ENCODE measurements at regions of chr19 and their contacts with region 1.

Region 1: DNA sequence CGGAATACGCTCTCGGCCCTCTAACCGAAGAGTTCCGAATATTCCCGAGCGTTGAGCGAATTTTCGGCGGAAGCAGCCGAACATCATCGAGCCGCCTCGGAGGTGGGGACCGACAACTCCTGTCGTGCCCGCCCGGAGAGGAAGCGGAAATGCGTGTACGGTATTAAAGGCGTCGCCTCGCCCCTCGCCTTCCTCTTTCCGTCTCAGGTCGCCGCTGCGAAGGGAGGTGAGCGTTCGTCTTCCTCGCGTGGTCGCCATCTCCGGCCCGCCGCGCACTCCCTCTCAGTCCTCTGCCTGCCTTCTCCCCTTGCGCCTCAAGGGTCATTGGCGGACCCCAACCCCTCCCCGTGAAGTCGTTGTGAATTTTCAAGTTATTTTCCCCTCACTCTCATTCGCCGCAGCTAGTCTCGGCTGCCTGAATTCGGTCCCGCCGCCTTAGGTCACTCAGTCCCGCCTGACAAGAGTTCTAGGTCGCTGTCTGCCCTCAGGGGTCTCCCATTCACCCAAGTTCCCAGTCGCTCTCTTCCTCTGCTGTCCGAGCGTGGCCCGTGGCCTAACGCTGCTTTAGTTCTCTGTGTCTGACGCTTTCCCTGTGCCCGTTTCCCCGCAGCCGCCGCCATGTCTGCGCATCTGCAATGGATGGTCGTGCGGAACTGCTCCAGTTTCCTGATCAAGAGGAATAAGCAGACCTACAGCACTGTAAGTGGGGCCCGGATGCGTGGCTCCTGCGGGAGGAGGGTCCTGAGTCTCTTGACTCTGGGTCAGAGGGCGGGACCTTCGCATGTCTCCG is at the start of gene RPL28:
- DNase-seq: peak; percentile 99
- ATAC-seq: peak; percentile 73
- H3K4me3 Mint-ChIP-seq: peak within 1 kb of the TSS; percentile 100
- H3K27ac Mint-ChIP-seq: peak within 1 kb of the TSS; percentile 99
- H3K4me1 Mint-ChIP-seq: peaks cover 68% of the 10 kb centered on the region
- H3K27me3 Mint-ChIP-seq: no peaks in the 10 kb centered on the region
- total RNA-seq, gene RPL28: 2,948 to 3,082 TPM

Region 2: GRCh38 chr19:55258828-55259539 is 127.0 kb before region 1 on chr19 and contains the start of gene PPP6R1:
- CTCF ChIA-PET with region 1: interaction called, 13 read pairs
- POLR2A ChIA-PET with region 1: interaction called, 19 read pairs
- DNase-seq: peak; percentile 95
- ATAC-seq: peak; percentile 76
- H3K4me3 Mint-ChIP-seq: peak within 1 kb of the TSS; percentile 91
- H3K27ac Mint-ChIP-seq: peak within 1 kb of the TSS; percentile 100
- H3K4me1 Mint-ChIP-seq: peaks cover 26% of the 10 kb centered on the region
- H3K27me3 Mint-ChIP-seq: no peaks in the 10 kb centered on the region
- total RNA-seq, gene PPP6R1: 256 to 265 TPM

Region 3: DNA sequence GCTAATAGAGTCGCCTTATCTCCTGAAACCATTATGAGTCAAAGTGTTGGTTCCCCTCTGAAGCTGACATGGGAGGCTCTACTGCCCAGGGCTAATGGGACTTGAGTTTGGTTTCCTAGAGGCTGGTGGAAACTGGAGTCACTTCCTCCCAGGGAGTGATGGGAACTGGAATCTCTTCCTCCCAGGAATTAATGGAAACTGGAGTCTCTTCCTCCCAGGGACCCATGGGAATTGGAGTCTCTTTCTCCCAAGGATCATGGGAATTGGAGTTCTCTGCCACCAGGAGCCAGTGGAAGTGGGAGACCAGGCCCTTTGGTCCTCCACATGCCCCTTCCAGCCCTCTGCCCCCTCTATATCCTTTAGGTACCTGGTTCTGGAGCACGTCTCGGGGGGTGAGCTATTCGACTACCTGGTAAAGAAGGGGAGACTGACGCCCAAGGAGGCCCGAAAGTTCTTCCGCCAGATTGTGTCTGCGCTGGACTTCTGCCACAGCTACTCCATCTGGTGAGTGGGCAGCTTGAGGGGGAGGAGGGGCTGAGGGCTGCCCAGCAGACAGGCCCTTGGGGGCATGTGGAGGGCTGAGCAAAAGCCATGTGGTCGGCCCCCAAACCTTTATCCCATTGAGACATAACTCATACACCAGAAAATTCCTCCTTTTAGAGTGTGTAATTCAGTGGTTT is 96.7 kb before region 1 on chr19:
- CTCF ChIA-PET with region 1: interaction called, 19 read pairs
- POLR2A ChIA-PET with region 1: no interaction called
- DNase-seq: no peak
- ATAC-seq: no peak
- H3K4me3 Mint-ChIP-seq: no peak overlapping the region
- H3K27ac Mint-ChIP-seq: no peak overlapping the region
- H3K4me1 Mint-ChIP-seq: peaks cover 13% of the 10 kb centered on the region
- H3K27me3 Mint-ChIP-seq: no peaks in the 10 kb centered on the region

Region 4: GRCh38 chr19:55301459-55302317 is 84.2 kb before region 1 on chr19:
- CTCF ChIA-PET with region 1: interaction called, 30 read pairs
- POLR2A ChIA-PET with region 1: interaction called, 4 read pairs
- DNase-seq: peak; percentile 97
- ATAC-seq: peak; percentile 94
- H3K4me3 Mint-ChIP-seq: peak overlapping the region; percentile 80
- H3K27ac Mint-ChIP-seq: peak overlapping the region; percentile 89
- H3K4me1 Mint-ChIP-seq: peaks cover 18% of the 10 kb centered on the region
- H3K27me3 Mint-ChIP-seq: peaks cover 3% of the 10 kb centered on the region

Region 5: DNA sequence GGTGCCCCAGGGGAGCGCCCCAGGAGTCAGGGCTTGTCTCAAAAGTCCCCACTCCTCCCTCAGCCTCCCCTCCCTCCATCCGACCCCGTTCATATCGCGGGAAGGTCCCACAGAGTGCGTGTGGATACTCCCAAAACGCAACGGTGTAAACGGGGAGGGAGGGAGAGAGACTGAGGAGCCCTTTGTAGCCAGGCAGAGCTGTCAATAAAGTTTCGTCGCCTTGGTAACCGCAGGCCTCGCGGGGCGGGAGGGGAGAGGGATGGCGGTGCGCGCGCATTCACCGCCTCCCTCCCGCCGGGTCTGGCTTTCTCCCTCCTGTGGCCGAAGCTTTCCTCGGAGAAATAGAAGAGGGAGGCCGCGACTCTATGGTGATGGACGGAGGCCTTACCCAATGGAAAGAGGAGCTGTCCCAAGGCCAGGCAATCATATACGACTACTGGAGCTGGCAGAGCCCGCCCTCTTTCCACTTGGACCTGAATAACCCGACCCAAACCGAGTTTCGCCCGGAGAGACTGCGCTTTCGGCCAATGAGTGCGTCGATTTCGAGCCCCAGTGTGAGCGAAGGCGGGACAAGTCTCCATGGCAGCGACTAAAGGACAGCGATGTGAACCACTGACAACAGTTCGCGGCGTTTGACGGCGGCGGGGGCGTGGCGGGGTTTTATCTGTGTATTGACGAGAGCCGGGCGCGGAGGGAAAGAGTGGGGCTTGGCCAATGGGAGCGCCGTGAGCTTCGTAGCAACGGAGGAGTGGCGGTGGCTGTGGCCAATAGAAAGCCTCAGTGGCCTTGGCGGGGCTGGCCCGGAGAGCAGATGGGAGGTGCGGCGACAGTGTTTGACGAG is 46.7 kb before region 1 on chr19 and contains the start of gene KMT5C:
- CTCF ChIA-PET with region 1: interaction called, 18 read pairs
- POLR2A ChIA-PET with region 1: interaction called, 8 read pairs
- DNase-seq: peak; percentile 100
- ATAC-seq: peak; percentile 86
- H3K4me3 Mint-ChIP-seq: peak within 1 kb of the TSS; percentile 89
- H3K27ac Mint-ChIP-seq: peak within 1 kb of the TSS; percentile 95
- H3K4me1 Mint-ChIP-seq: peaks cover 20% of the 10 kb centered on the region
- H3K27me3 Mint-ChIP-seq: peaks cover 9% of the 10 kb centered on the region
- total RNA-seq, gene KMT5C: 21.9 to 26.7 TPM

Region 6: DNA sequence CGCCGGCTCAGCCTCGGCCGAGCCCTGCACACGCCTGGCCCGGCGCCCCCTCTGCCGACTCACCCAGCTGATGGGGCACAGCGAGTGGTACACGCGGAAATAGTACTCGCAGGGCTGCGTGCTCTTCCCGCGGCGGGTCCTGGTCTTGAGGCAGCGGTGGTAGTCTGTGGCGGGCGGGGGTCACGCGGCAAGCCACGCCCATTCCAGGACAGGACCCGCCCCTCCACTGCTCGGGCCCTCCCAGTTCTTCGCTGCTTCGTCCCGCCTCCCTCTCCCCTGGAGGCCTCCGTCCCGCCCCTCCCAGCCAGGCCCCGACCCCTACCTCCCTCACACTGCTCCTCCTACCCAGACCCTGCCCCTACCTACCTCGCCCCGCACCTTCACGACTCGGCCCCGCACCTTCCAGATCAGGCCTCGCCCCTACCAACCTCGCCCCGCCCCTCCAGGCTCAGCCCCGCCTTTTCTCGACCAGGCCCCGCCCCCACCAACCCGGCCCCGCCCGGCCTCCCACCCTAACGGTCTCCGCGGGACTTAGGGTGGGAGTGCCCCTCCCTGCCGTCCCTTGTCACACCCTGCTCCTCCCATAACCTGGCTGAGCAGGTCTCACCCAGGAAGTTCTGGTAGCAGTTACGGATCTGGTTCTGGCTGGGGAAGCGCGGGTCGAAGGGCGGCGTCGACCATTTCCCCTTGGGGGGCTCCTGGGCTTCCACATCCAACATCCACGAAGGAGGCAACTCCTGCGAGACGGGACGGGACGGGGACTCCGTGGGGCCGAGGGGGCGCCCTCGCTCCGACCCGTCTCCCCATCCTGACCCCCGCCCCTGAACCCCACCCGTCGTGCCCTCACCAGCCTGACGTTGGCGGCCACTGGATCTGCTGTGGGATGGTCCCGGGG is 31.9 kb before region 1 on chr19:
- CTCF ChIA-PET with region 1: no interaction called
- POLR2A ChIA-PET with region 1: interaction called, 10 read pairs
- DNase-seq: peak; percentile 75
- ATAC-seq: peak; percentile 88
- H3K4me3 Mint-ChIP-seq: peak overlapping the region; percentile 67
- H3K27ac Mint-ChIP-seq: peak overlapping the region; percentile 15
- H3K4me1 Mint-ChIP-seq: peaks cover 37% of the 10 kb centered on the region
- H3K27me3 Mint-ChIP-seq: peaks cover 42% of the 10 kb centered on the region

Region 7: DNA sequence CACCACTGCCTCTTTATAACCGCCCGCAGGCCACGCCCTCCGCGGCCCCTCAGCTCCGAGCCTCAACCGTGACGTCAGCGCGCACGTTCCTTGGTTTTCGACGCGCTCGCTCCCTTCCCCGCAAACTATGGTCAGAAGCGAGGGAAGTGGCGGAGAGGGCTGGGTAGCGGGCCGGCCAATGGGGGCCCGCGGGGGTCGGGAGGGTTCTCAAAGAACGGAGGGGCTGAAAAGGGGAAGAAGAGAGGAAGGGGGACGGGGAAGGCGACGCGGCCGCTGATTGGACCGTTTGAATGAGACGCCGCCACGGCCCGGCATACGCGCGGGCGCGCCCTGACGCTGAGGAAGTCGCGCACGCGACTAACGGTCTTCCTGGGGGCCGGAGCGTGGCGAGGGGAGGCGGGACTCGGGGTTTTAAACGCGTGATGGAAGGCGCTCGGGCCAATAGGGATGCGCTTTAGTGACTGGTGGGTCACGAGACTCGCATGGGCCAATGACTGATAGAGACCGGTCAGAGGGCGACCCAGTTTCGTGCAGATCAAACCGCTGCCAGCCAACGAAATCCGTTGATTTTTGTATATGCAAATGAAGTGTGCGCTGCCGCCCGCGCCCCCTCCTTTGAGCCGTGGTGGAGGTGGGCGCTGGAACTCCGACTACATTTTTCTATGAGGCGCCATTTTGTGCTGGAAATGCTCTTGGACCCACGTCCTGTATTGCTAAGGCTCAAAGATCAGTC is 22.0 kb after region 1 on chr19:
- CTCF ChIA-PET with region 1: no interaction called
- POLR2A ChIA-PET with region 1: interaction called, 213 read pairs
- DNase-seq: peak; percentile 99
- ATAC-seq: peak; percentile 92
- H3K4me3 Mint-ChIP-seq: peak overlapping the region; percentile 96
- H3K27ac Mint-ChIP-seq: peak overlapping the region; percentile 99
- H3K4me1 Mint-ChIP-seq: peaks cover 38% of the 10 kb centered on the region
- H3K27me3 Mint-ChIP-seq: peaks cover 8% of the 10 kb centered on the region

Region 8: DNA sequence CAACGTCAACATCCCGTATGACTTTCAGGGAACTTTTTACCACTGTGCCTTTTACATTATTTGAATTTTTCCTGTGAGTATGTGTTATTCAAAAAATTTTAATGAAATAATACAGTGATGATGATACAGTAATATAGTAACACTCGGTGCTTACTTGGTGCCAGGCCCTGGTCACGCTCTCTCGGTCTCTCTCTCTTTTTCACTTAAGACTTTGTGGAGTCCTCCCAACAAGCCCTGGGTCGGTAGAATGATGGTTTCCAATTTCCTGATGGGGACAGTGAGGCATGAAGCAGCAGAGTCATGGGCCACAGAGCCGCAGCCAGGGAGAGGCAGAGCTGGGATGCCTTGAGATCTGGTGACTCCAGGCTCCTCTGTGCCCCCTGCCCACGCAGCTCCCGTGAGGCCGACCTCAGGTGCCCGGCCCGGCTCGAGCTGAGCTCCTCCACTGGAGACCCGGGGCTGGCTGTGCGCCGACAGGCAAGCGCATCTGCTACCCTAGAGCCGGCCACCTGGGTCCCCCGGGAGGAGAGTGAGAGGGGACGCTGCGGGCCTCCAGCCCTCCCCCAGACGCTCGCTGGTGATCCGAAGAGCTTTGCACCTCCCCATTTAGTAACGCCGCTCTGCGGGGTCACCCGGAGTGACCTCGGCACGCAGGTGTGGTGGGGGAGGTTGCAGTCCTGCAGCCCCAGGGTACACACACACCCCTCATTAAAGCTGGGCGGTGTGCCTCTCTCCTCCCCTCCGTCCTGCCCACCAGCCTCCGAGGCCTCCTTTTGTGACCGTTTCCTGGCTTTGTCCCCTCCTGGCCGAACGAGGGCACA is 163.8 kb after region 1 on chr19:
- CTCF ChIA-PET with region 1: no interaction called
- POLR2A ChIA-PET with region 1: no interaction called
- DNase-seq: no peak
- ATAC-seq: no peak
- H3K4me3 Mint-ChIP-seq: no peak overlapping the region
- H3K27ac Mint-ChIP-seq: no peak overlapping the region
- H3K4me1 Mint-ChIP-seq: no peaks in the 10 kb centered on the region
- H3K27me3 Mint-ChIP-seq: peaks cover 3% of the 10 kb centered on the region

Region 9: GRCh38 chr19:55653758-55654539 is 268.0 kb after region 1 on chr19:
- CTCF ChIA-PET with region 1: no interaction called
- POLR2A ChIA-PET with region 1: no interaction called
- DNase-seq: peak; percentile 100
- ATAC-seq: peak; percentile 83
- H3K4me3 Mint-ChIP-seq: peak overlapping the region; percentile 83
- H3K27ac Mint-ChIP-seq: peak overlapping the region; percentile 94
- H3K4me1 Mint-ChIP-seq: peaks cover 42% of the 10 kb centered on the region
- H3K27me3 Mint-ChIP-seq: no peaks in the 10 kb centered on the region